Activated T-helper 1 cell treated with anti-CD3 and anti-CD28 coated beads, Interleukin-12 subunit alpha, Interleukin-12 subunit beta, Interleukin-2, Interleukin-4 antibody, amounts not matched to agents 30 ng/mL and 10 ng/mL and 1 ng/mL, durations not matched to agents 14 hours and 24 hours and 36 hours (primary cell): ENCODE measurements at regions of chr9 and their contacts with region 1.

Region 1: DNA sequence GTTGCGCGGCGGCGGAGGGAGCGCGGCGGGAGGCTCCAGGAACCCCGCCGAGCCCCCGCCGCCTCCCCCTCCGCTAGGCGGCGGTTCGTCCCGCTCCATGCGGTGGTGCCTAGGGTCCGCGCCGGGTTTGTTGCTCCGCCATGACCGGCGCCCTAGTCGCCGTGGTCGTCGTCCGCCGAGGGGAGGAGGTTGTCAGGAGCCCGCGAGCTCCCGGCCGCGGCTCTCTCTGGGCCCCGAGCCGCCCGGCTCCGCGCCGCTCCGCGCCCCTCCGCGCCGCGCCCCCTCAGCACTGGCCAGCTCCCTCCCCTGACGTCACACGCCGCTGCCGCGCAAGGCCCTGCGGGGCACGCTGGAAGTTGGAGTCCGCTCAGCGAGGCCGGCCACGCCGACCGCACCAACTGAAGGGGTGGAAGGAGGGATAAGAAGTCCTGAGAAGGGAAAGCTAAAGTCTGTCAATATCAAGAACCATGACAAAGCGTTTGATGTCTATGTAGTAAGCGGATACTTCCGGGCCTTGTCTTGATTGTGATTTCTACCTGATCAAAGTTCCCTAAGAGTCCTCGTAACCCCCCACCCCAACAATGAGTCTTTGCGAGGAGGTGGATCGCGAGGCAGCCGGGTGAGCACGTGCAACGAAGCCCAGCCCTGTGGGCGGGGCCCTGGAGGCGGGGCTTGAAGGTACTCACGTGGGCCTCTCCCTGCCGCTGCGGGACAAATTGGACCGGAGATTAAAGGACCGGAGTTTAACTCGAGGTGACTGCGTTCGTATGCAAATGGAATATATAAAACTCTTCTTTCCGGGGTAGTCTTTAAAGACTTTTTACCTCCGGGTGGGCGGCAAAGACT is at the start of gene NR6A1:
- DNase-seq: peak; percentile 92
- H3K4me3 Mint-ChIP-seq: peak within 1 kb of the TSS; percentile 91
- H3K27ac Mint-ChIP-seq: peak within 1 kb of the TSS; percentile 83
- H3K4me1 Mint-ChIP-seq: peaks cover 51% of the 10 kb centered on the region
- H3K27me3 Mint-ChIP-seq: peaks cover 66% of the 10 kb centered on the region
- total RNA-seq, gene NR6A1: 1.7 and 2.3 TPM in 2 replicates

Region 2: GRCh38 chr9:124852829-124853531 is 81.7 kb after region 1 on chr9 and contains the start of gene WDR38:
- intact Hi-C with region 1: loop called (anchors 1 kb)
- DNase-seq: peak; percentile 79
- H3K4me3 Mint-ChIP-seq: peak within 1 kb of the TSS; percentile 68
- H3K27ac Mint-ChIP-seq: no peak within 1 kb of the TSS
- H3K4me1 Mint-ChIP-seq: peaks cover 16% of the 10 kb centered on the region
- H3K27me3 Mint-ChIP-seq: peaks cover 9% of the 10 kb centered on the region
- total RNA-seq, gene WDR38: not detected in 2 replicates

Region 3: GRCh38 chr9:124868511-124869465 is 97.5 kb after region 1 on chr9:
- intact Hi-C with region 1: loop called (anchors 1 kb)
- DNase-seq: peak; percentile 93
- H3K4me3 Mint-ChIP-seq: peak overlapping the region; percentile 99
- H3K27ac Mint-ChIP-seq: peak overlapping the region; percentile 100
- H3K4me1 Mint-ChIP-seq: peaks cover 56% of the 10 kb centered on the region
- H3K27me3 Mint-ChIP-seq: peaks cover 1% of the 10 kb centered on the region

Region 4: GRCh38 chr9:124940693-124941453 is 169.6 kb after region 1 on chr9 and contains the start of gene GOLGA1:
- intact Hi-C with region 1: loop called (anchors 1 kb)
- DNase-seq: peak; percentile 92
- H3K4me3 Mint-ChIP-seq: peak within 1 kb of the TSS; percentile 94
- H3K27ac Mint-ChIP-seq: peak within 1 kb of the TSS; percentile 99
- H3K4me1 Mint-ChIP-seq: peaks cover 29% of the 10 kb centered on the region
- H3K27me3 Mint-ChIP-seq: no peaks in the 10 kb centered on the region
- total RNA-seq, gene GOLGA1: 16.6 TPM in 2 replicates

Region 5: DNA sequence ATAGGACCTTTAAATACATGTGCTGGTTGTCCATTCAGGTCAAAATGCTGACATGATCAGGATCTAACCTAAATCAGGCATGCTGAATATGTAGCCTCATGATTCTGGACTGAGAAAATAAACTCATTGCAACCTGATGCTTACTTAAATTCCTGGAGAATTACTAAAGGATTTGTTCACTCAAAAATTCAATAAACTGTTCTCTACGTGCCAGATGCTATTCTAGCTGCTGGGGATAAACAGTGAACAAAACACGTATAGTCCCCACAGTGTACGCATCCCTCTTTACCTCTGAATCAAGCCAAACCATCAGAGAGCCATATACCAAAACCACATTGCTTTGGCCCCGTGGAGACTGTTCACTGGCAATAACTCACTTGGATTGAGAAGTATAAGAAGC is 366.0 kb after region 1 on chr9:
- intact Hi-C with region 1: no loop called
- DNase-seq: no peak
- H3K4me3 Mint-ChIP-seq: no peak overlapping the region
- H3K27ac Mint-ChIP-seq: no peak overlapping the region
- H3K4me1 Mint-ChIP-seq: peaks cover 30% of the 10 kb centered on the region
- H3K27me3 Mint-ChIP-seq: no peaks in the 10 kb centered on the region

Region 6: DNA sequence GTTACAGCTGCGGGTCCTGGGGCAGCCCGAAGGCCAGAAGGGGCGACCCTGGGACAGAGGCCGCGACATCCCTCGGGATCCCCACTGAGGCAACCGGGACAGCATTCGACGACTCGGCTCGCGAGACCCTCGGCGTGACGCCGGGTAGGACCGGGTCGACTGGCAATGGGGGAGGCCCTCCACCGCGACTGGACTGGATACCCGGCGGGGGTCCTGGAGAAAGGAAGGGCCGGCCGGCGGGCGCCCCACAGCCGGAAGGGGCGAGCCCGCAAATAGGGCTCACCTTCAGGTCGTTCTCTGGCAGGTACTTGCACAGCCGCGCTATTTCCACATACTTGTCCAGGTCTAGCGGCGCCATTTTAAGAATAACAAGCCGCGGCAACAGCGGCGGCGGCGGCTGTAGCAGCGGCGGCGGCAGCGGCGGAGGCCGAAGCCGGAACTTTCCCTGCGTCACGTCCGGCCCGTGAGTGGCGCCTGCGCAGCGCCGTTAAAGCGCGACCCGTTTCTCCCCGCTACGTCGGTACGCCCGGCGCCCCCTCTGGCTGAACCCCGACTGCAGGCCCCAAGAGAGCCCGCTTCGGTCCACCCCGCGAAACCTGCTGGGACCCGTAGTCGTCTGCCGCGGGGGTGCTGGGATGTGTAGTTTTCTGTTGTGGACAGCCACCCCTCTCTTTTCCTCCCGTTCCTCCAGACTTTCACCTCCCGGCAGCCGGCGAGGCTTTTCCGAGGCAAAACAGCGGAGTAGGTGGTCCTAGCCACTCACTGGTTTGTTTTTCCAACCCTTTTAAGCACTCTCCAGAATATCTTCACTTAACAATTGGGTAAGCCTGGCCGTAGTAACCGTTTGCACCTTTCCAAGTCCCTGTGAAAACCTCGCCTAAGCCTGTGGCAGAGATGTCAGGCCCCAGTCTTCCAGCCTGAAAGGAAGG is 418.4 kb after region 1 on chr9 and contains the start of gene PPP6C:
- intact Hi-C with region 1: loop called (anchors 1 kb)
- DNase-seq: peak; percentile 96
- H3K4me3 Mint-ChIP-seq: peak within 1 kb of the TSS; percentile 96
- H3K27ac Mint-ChIP-seq: peak within 1 kb of the TSS; percentile 88
- H3K4me1 Mint-ChIP-seq: peaks cover 33% of the 10 kb centered on the region
- H3K27me3 Mint-ChIP-seq: no peaks in the 10 kb centered on the region
- total RNA-seq, gene PPP6C: 47.2 and 50.8 TPM in 2 replicates

Region 7: GRCh38 chr9:125241000-125241862 is 470.0 kb after region 1 on chr9 and contains the start of gene HSPA5:
- intact Hi-C with region 1: loop called (anchors 1 kb)
- DNase-seq: peak; percentile 99
- H3K4me3 Mint-ChIP-seq: peak within 1 kb of the TSS; percentile 96
- H3K27ac Mint-ChIP-seq: peak within 1 kb of the TSS; percentile 96
- H3K4me1 Mint-ChIP-seq: peaks cover 36% of the 10 kb centered on the region
- H3K27me3 Mint-ChIP-seq: no peaks in the 10 kb centered on the region
- total RNA-seq, gene HSPA5: 242 and 243 TPM in 2 replicates

Region 8: DNA sequence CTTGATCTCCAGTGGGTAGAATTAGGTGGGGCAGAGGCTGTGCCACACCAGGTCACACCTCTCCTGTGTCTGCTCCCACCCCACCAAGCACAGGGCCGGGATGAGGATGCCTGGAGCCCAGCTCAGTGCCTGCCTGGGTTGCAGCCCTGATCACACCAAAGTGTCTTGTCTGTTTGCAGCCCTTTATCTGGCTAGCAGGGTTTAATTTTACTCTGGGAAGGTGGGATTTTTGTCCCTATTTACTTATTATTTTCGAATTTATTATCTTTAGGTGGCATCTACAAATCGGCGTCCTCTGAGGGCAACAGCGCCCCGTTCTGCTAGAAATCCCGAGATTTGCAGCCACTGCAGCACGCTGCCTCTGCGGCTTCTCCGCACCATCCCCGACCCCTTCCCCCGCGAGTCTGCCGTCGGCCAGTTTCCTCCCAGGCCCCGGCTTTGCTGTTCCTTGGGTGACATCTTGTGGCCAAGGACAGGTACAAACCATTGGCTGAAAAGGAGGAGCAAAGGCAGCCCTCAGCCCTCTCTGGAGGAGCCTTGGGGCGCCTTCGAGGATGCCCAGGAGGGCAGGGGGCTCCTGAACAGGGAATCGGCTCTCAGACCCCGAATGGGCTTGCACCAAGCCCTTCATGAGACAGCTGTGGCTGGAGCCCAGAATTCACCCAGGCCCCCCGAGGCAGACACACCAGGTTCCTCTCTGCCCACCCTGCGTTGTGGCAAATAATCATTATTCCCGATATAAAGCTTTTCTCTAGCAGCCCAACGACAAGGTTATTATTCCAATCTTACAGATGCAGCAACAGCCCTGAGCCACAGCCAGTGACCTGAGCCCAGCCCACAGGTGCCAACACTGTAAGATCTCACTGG is 603.4 kb after region 1 on chr9:
- intact Hi-C with region 1: loop called (anchors 1 kb)
- DNase-seq: peak; percentile 62
- H3K4me3 Mint-ChIP-seq: peak overlapping the region; percentile 45
- H3K27ac Mint-ChIP-seq: no peak overlapping the region
- H3K4me1 Mint-ChIP-seq: no peaks in the 10 kb centered on the region
- H3K27me3 Mint-ChIP-seq: peaks cover 6% of the 10 kb centered on the region